ENCODE measurements at regions of chr15 and their contacts with region 1.

Region 1: DNA sequence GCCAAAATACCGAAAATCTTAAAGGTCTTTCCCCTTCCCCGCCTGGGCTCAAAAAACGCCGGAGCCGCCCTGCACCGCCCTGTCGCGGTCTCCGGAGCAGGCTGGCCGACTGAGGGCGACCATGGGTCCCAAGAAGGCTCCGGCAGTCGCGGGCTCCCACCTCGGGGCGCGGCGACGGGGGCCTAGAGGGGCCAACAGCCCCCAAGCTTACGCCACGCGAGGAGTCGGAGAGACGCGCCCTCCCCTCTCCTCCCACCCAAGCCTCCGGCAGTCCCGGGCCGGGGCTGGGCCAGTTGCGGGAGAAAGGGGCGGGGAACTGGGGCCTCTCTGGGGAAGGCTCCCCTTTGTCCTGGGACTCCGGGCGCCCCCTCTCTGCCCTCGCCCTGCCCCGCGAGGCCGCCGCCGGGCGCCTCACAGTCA is 69.2 kb downstream of the GOLGA8B start:
- DNase-seq: no peak
- H3K4me3 ChIP-seq: peak overlapping the region; percentile 57 to 82
- H3K27ac ChIP-seq: peak overlapping the region; percentile 38 to 52
- H3K4me1 ChIP-seq: peaks cover 0 to 16% (median 11%) of the 10 kb centered on the region in 4 donors
- H3K27me3 ChIP-seq: no peaks in the 10 kb centered on the region
- CTCF ChIP-seq: no peak

Region 2: GRCh38 chr15:34587717-34588674 is 73.7 kb after region 1 on chr15:
- intact Hi-C with region 1: loop called (anchors 10 kb)
- DNase-seq: peak in 1 of 2 donors; percentile 63
- H3K4me3 ChIP-seq: peak overlapping the region in 1 of 2 donors; percentile 23
- H3K27ac ChIP-seq: no peak overlapping the region
- H3K4me1 ChIP-seq: peaks cover 0 to 11% (median 8%) of the 10 kb centered on the region in 4 donors
- H3K27me3 ChIP-seq: no peaks in the 10 kb centered on the region
- CTCF ChIP-seq: peak; percentile 72 to 76